Adrenal gland (tissue), 19 donors: ENCODE measurements at regions of chr9 and their contacts with region 1.

Region 1: GRCh38 chr9:3441197-3441816 is 84.5 kb downstream of the RFX3 start:
- DNase-seq: peak; percentile 28 to 80 (median 42)
- H3K4me3 ChIP-seq: no peak overlapping the region
- H3K27ac ChIP-seq: no peak overlapping the region
- H3K4me1 ChIP-seq: no peaks in the 10 kb centered on the region
- H3K27me3 ChIP-seq: no peaks in the 10 kb centered on the region
- CTCF ChIP-seq: peak; percentile 35 to 66 (median 56)
- POLR2A ChIP-seq: no peak

Region 2: GRCh38 chr9:3244963-3245653 is 196.2 kb before region 1 on chr9:
- intact Hi-C with region 1: loop called in 1 of 2 experiments (anchors 5 kb)
- DNase-seq: no peak
- H3K4me3 ChIP-seq: no peak overlapping the region
- H3K27ac ChIP-seq: no peak overlapping the region
- H3K4me1 ChIP-seq: peaks cover 0 to 6% of the 10 kb centered on the region in 2 donors
- H3K27me3 ChIP-seq: no peaks in the 10 kb centered on the region
- CTCF ChIP-seq: no peak
- POLR2A ChIP-seq: no peak